Lower lobe of right lung (tissue), 2 donors: ENCODE measurements at regions of chr4 and their contacts with region 1.

Region 1: DNA sequence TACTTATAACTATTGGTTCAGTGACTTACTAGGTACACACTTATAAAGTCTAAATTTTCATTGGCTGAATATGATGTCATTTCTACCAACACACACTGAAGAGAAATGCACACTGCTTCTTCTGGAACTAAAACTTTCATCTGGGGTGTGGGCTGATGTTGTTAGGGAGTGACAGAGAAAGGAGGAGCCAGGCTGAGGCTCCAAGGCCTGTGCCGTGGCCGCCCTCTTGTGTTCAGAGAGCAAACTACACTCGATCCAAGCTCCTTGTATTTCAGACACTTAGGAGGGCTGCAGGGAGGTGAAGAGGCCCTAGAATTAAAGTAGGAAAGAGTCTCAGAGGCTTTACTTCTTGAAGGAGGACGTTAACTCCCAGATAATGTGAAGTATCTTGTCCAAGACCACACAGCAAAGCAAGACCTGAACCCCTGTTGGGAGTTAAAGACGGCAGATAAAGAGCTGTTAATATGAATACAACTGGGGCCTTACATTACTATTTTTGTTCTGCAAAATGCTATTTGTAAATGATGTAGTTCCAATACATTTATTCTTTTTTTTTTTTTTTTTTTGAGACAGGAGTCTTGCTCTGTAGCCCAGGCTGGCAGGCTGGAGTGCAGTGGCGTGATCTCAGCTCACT is 137.5 kb downstream of the AFAP1 start:
- DNase-seq: peak; percentile 80
- ATAC-seq: peak; percentile 55 to 78
- H3K4me3 ChIP-seq: no peak overlapping the region
- H3K27ac ChIP-seq: no peak overlapping the region
- H3K4me1 ChIP-seq: peaks cover 41% of the 10 kb centered on the region
- H3K27me3 ChIP-seq: no peaks in the 10 kb centered on the region
- CTCF ChIP-seq: peak; percentile 90

Region 2: GRCh38 chr4:7649741-7650531 is 152.3 kb before region 1 on chr4:
- intact Hi-C with region 1: no loop called
- DNase-seq: peak; percentile 53
- ATAC-seq: peak; percentile 46 to 63
- H3K4me3 ChIP-seq: no peak overlapping the region
- H3K27ac ChIP-seq: peak overlapping the region; percentile 56
- H3K4me1 ChIP-seq: peaks cover 29% of the 10 kb centered on the region
- H3K27me3 ChIP-seq: peaks cover 3% of the 10 kb centered on the region
- CTCF ChIP-seq: no peak

Region 3: DNA sequence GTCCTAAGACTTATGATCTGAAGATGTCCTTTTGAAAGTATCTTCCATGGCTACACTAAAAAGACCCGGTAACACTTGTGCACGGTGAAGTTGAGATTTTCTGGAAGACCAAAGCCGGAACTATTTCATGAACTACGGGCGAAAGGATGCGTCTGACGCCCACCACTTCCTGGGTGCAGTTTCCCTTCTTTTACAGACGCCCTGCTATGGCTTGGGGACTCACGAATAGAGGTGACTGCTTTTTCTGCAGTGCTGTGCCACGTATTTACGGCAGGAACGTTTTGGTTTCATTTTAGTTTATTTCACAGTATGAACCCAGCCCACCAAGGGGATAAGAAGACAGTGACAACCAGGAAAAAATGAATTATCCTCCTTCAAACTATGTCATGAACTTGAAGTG is 43.0 kb before region 1 on chr4:
- intact Hi-C with region 1: loop called (anchors 5 kb)
- DNase-seq: peak; percentile 63
- ATAC-seq: peak in 1 of 2 donors; percentile 44
- H3K4me3 ChIP-seq: no peak overlapping the region
- H3K27ac ChIP-seq: no peak overlapping the region
- H3K4me1 ChIP-seq: peaks cover 15% of the 10 kb centered on the region
- H3K27me3 ChIP-seq: no peaks in the 10 kb centered on the region
- CTCF ChIP-seq: no peak

Region 4: DNA sequence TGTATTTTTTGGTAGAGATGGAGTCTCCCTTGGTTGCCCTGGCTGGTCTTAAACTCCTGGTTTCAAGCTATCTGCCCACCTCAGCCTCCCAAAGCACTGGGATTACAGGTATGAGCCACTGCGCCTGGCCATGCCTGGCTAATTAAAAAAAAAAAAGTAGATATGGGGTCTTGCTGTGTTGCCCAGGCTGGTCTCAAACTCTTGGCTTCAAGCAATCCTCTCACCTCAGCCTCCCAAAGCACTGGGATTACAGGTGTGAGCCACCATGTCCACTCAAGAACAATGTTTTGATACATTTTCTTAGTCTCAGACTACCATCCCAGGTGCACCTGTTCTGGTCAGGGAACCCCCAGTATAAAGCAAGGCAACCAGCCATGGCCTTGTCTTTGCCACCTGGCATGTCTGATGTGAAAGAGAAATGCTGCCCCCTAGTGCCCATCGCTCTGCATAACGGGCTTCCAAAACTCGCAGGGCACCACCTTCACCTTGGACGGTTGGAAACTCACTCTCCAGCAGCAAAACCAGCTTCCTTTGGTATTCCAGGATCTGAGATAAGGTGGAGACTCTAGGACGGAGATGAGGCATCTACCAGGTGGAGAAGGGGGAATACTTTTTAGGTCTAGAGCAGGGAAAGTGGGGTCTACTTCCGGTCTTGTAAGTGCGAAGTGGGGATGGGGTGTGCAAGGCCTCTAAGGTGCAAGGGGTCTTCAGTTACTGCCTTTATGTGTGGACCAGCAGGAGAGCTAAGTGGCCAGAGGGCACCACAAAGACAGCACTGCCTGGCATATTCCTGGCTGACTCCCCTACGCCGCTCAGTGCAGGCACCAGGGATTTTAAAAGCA is 185.2 kb after region 1 on chr4:
- intact Hi-C with region 1: loop called (anchors 5 kb)
- DNase-seq: peak; percentile 69
- ATAC-seq: peak; percentile 83 to 89
- H3K4me3 ChIP-seq: no peak overlapping the region
- H3K27ac ChIP-seq: no peak overlapping the region
- H3K4me1 ChIP-seq: peaks cover 6% of the 10 kb centered on the region
- H3K27me3 ChIP-seq: no peaks in the 10 kb centered on the region
- CTCF ChIP-seq: peak; percentile 93